ENCODE measurements at regions of chr15 and their contacts with region 1.

Region 1: GRCh38 chr15:31128919-31129768 is 27.6 kb upstream of the TRPM1 start:
- DNase-seq: no peak
- H3K4me3 ChIP-seq: no peak overlapping the region
- H3K27me3 ChIP-seq: no peaks in the 10 kb centered on the region; the same call in 1 of the 2 replicates
- CTCF ChIP-seq: peak; percentile 99

Region 2: GRCh38 chr15:30830961-30831360 is 298.2 kb before region 1 on chr15:
- CTCF ChIA-PET with region 1: no interaction called
- POLR2A ChIA-PET with region 1: no interaction called
- DNase-seq: no peak
- H3K4me3 ChIP-seq: no peak overlapping the region
- H3K27me3 ChIP-seq: no peaks in the 10 kb centered on the region
- CTCF ChIP-seq: no peak

Region 3: GRCh38 chr15:30859091-30859874 is 269.9 kb before region 1 on chr15:
- CTCF ChIA-PET with region 1: interaction called, 12 read pairs
- POLR2A ChIA-PET with region 1: no interaction called
- DNase-seq: peak; percentile 9
- H3K4me3 ChIP-seq: no peak overlapping the region
- H3K27me3 ChIP-seq: no peaks in the 10 kb centered on the region
- CTCF ChIP-seq: peak; percentile 80

Region 4: DNA sequence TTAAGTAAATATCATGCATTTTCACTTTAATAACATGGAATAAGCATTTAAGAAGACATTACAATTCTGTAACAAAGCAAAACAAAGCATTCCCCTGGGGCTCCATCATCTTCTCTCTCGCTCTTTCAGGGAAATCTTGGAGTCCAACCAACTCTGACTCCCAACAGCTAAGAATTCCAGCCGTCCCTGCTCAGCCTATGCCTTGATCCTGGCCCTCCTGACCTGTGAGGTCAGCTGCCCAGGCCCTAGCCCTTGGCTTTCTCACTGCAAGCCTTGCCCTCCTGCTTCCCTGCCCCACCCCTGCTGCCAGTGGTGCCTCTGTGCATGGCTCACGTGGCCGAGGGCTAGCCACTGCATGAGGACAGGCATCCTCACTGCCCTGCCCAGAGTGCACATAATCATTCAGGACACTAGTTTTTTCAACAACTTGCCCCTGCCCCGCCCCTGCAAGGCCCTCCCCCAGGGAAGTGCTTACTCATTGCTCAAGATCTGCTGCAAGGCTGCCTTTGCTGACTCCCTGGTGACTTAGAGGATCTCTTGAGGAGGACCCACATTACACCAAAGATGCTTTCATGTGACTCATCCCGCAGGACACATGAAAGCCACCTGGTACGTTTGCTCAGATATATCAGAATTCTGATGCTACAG is 175.3 kb before region 1 on chr15:
- CTCF ChIA-PET with region 1: interaction called, 12 read pairs
- POLR2A ChIA-PET with region 1: no interaction called
- DNase-seq: peak; percentile 73
- H3K4me3 ChIP-seq: no peak overlapping the region
- H3K27me3 ChIP-seq: no peaks in the 10 kb centered on the region
- CTCF ChIP-seq: no peak

Region 5: DNA sequence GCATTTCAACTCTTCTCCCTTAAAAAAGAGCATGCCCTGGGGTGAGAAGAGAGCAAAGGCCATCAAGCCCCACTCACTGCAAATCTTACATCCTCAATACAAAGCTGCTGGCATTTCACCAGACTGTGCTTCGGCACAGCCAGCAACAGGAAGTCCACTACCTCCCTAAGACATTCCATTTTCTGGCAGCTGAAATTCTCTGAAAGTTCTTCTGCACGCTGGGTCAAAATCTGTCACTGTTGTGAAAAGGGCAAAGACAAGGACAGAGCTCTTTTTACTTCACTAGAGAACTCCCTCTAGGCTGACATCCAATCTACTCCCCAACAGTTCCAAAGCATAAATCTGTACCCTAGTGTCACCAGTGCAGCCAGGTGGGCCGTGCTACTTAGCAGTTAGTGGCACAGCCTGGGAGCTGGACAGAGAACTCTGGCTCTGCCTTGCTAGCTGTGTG is 144.0 kb before region 1 on chr15:
- CTCF ChIA-PET with region 1: interaction called, 14 read pairs
- POLR2A ChIA-PET with region 1: no interaction called
- DNase-seq: no peak
- H3K4me3 ChIP-seq: no peak overlapping the region
- H3K27me3 ChIP-seq: no peaks in the 10 kb centered on the region
- CTCF ChIP-seq: no peak

Region 6: GRCh38 chr15:31016446-31016915 is 112.7 kb before region 1 on chr15:
- CTCF ChIA-PET with region 1: interaction called, 10 read pairs
- POLR2A ChIA-PET with region 1: no interaction called
- DNase-seq: peak; percentile 94
- H3K4me3 ChIP-seq: no peak overlapping the region
- H3K27me3 ChIP-seq: no peaks in the 10 kb centered on the region
- CTCF ChIP-seq: no peak

Region 7: GRCh38 chr15:31098953-31099740 is 30.0 kb before region 1 on chr15:
- CTCF ChIA-PET with region 1: interaction called, 15 read pairs
- POLR2A ChIA-PET with region 1: no interaction called
- DNase-seq: no peak
- H3K4me3 ChIP-seq: no peak overlapping the region
- H3K27me3 ChIP-seq: no peaks in the 10 kb centered on the region
- CTCF ChIP-seq: peak; percentile 36

Region 8: DNA sequence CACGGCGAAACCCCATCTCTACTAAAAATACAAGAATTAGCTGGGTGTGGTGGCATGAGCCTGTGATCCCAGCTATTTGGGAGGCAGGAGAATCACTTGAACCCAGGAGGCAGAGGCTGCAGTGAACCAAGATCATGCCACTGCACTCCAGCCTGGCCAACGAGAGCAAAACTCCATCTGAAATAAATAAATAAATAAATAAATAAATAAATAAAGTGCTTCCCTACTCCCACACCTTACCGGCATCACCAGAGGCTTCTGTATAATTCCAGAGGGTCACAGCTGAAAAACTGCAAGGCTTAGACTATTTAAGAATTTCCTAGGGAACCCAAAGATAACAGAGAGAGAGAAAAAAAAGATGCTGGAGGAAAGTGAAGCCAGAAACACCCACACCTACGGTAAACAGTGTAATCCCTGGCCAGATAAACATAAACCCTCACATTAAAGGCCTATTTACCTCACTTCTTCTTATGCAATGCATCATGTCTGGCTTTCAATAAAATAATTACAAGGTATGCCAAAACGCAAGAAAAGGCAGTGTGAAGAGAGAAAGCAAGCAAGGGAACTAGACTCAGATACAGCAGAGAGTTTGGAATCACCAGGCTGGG is 12.6 kb before region 1 on chr15:
- CTCF ChIA-PET with region 1: interaction called, 28 read pairs
- POLR2A ChIA-PET with region 1: no interaction called
- DNase-seq: no peak
- H3K4me3 ChIP-seq: no peak overlapping the region
- H3K27me3 ChIP-seq: no peaks in the 10 kb centered on the region
- CTCF ChIP-seq: no peak

Region 9: DNA sequence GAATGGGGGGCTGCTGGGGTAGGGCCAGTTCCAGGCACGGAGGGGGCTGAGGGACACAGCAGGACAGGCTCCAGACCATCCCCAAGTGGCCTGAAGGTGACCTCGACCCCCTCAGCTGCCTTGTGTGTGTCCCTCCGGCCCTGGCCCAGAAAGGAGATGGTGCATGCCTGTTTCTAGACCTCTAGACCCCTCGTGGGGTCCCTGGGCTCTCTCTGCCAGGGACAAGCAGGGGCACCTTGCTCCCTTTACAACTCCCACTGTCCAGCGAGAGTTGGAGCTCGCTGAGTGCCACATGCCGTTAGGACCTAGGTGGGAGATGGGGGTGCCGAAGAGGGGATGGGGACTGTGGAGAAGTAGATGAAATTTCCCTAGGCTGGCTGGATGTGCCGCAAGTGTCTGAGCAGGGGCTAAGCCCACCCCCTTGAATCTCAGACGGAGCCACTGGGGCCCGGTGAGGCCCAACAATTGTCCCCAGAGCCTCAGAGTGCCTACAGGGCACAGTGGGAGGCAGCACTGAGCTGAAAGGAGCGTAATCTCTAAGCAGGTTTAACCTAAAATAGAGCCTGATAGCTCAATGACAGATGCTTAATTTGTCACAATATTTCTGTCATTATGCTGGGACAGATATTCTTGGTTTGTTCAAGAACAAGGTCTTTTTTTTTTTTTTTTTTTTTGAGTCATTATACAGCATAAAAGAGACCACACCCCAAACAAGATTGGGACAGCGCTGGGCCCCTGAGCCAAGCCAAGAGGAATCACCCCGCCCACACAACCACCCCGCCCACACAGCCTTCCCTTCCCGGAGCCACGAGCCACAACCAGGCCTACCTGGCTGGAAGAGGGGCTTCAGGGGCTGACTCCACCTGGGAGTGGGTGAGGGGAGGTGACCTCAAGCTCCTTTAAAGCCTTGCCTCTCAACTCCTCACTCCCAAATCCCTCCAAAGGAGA is 173.9 kb after region 1 on chr15:
- CTCF ChIA-PET with region 1: no interaction called
- POLR2A ChIA-PET with region 1: no interaction called
- DNase-seq: no peak
- H3K4me3 ChIP-seq: no peak overlapping the region
- H3K27me3 ChIP-seq: peaks cover 6% of the 10 kb centered on the region; the same call in 1 of the 2 replicates
- CTCF ChIP-seq: no peak

Measured in BJ (cell line).